ENCODE measurements at regions of chr16 and their contacts with region 1.

Region 1: DNA sequence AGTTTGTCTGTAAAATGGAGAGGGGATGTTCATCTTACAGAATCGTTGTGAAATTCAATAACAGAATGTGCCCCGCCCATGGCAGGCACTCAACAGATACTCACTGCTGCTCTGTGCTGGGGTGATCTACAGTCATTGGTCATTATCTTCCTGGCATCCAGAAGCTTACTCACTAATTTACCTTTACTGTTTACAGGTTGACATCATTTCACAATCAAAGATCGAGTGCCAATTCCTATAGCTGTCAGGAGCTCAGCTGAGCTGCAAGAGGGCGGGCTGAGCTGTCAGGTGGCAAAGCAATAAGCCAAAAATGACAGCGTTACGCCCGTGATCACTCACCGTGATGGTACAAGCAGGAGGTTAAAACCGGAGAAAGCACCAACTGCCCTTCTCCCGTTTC is 51.2 kb downstream of the LITAF start:
- DNase-seq: no peak
- ATAC-seq: no peak
- H3K4me3 Mint-ChIP-seq: no peak overlapping the region
- H3K27ac Mint-ChIP-seq: no peak overlapping the region
- H3K4me1 Mint-ChIP-seq: peaks cover 6% of the 10 kb centered on the region
- H3K27me3 Mint-ChIP-seq: no peaks in the 10 kb centered on the region

Region 2: DNA sequence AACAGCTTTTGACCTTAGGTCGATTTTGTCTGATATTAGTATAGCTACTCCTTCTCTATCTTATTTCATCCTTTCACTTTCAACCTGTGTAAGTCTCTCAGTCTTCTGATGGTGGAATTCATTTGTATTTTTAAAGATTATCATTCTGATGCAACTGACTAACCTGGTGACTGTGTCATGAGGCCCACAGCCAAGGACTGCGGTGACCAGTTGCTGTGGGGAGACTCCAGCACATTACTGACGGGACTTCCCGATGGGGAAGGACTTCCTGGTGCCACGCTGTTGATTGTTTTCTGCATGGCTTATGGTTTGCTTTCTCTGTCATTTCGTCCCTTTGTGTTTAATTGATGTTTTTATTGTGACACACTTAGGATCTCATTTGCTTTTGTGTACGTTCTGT is 156.1 kb before region 1 on chr16:
- CTCF ChIA-PET with region 1: no interaction called
- DNase-seq: peak; percentile 81
- ATAC-seq: peak; percentile 86
- H3K4me3 Mint-ChIP-seq: peak overlapping the region; percentile 60
- H3K27ac Mint-ChIP-seq: peak overlapping the region; percentile 81
- H3K4me1 Mint-ChIP-seq: peaks cover 17% of the 10 kb centered on the region
- H3K27me3 Mint-ChIP-seq: no peaks in the 10 kb centered on the region

Region 3: DNA sequence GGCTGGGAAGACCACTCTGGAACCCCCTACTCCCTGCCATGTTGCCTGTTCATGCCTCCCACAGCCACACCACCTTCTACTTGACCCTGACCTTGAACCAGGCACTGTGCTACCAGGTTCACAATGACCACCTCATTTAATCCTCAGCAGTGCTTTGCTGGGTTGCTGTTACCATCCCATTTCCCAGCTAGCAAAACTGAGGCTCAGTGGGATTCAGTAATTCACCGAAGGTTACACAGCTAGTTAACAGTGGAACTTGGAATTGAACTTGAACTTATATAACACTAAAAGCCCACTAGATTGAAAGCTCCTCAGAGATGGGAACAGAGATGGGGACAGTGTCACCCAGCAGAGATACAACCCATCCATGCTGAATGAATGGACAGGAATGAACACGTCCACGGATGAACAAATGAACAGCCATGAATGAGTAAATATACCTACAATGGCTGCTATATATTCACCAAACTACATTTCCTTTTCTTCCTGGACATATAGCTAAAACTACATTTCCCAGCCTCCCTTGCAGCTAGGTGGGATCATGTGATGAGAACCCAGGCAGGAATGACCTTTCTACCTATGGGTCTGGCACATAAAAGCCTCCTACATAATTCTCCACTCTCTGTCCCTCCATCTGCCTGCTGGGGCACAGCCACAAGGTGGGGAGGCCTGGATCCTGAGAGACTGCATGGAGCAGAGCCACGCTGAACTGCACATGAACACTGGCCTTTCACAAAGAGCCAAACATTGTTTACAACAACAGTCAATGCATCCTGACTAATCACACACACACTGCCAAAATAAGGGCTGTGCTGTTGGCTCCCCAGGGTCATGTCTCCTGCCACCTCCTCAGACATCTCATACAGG is 95.4 kb before region 1 on chr16:
- CTCF ChIA-PET with region 1: no interaction called
- DNase-seq: no peak
- ATAC-seq: no peak
- H3K4me3 Mint-ChIP-seq: no peak overlapping the region
- H3K27ac Mint-ChIP-seq: no peak overlapping the region
- H3K4me1 Mint-ChIP-seq: no peaks in the 10 kb centered on the region
- H3K27me3 Mint-ChIP-seq: peaks cover 4% of the 10 kb centered on the region

Region 4: GRCh38 chr16:11493532-11493929 is 41.9 kb before region 1 on chr16:
- CTCF ChIA-PET with region 1: no interaction called
- DNase-seq: no peak
- ATAC-seq: no peak
- H3K4me3 Mint-ChIP-seq: no peak overlapping the region
- H3K27ac Mint-ChIP-seq: no peak overlapping the region
- H3K4me1 Mint-ChIP-seq: peaks cover 18% of the 10 kb centered on the region
- H3K27me3 Mint-ChIP-seq: no peaks in the 10 kb centered on the region

Region 5: GRCh38 chr16:11547118-11547916 is 11.8 kb after region 1 on chr16:
- CTCF ChIA-PET with region 1: interaction called, 10 read pairs
- DNase-seq: no peak
- ATAC-seq: no peak
- H3K4me3 Mint-ChIP-seq: no peak overlapping the region
- H3K27ac Mint-ChIP-seq: no peak overlapping the region
- H3K4me1 Mint-ChIP-seq: no peaks in the 10 kb centered on the region
- H3K27me3 Mint-ChIP-seq: no peaks in the 10 kb centered on the region

Region 6: GRCh38 chr16:11554053-11554452 is 18.6 kb after region 1 on chr16:
- CTCF ChIA-PET with region 1: interaction called, 11 read pairs
- DNase-seq: no peak
- ATAC-seq: no peak
- H3K4me3 Mint-ChIP-seq: no peak overlapping the region
- H3K27ac Mint-ChIP-seq: no peak overlapping the region
- H3K4me1 Mint-ChIP-seq: peaks cover 31% of the 10 kb centered on the region
- H3K27me3 Mint-ChIP-seq: no peaks in the 10 kb centered on the region

Region 7: GRCh38 chr16:11586856-11587642 is 51.6 kb after region 1 on chr16 and contains the start of gene LITAF:
- CTCF ChIA-PET with region 1: interaction called, 30 read pairs
- DNase-seq: peak; percentile 75
- ATAC-seq: peak; percentile 78
- H3K4me3 Mint-ChIP-seq: peak within 1 kb of the TSS; percentile 89
- H3K27ac Mint-ChIP-seq: peak within 1 kb of the TSS; percentile 90
- H3K4me1 Mint-ChIP-seq: peaks cover 41% of the 10 kb centered on the region
- H3K27me3 Mint-ChIP-seq: peaks cover 3% of the 10 kb centered on the region
- total RNA-seq, gene LITAF: 91.4 to 155 TPM

Region 8: DNA sequence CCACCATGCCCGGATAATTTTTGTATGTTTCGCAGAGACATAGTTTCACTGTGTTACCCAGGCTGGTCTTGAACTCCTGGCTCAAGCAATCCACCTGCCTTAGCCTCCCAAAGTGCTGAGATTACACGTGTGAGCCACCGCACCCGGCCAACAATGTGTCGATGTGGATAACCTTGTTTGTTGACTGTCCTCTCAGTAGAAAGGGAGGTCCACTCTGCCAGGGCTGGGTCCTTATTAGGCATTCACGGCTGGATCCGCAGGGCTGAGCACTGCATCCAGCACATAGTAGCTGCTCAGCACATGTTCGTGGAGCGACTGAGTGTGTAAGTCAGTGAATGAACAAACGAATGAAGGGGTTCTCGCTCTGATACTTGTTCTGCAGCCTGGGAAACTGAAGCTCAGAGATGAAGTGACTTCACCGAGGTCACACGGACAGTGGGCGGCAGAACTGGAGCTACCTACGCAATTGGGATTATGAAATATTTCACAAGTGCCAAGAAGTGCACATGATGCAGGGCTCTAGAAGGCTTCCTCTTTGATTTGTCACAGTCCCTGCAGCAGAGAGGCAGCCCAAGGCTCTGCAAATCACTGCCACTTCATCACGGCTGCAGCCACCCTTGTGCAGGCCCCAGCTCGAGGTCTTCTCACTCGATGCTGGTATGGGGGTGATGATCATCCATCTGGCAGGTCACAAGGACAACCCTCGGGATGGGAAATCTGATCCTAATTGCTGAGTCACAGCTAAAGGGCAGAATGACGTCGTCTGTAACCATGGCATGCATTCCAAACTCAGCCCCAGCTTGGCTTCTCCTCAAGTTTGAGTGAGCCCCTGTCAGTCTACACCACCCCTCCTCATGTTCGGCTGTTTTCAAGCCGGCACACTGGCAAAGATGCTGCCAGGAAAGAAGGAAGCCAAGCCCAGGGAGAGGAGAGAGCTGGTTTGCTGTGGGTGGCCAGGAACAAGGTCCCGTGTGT is 104.7 kb after region 1 on chr16:
- CTCF ChIA-PET with region 1: interaction called, 147 read pairs
- DNase-seq: no peak
- ATAC-seq: no peak
- H3K4me3 Mint-ChIP-seq: no peak overlapping the region
- H3K27ac Mint-ChIP-seq: no peak overlapping the region
- H3K4me1 Mint-ChIP-seq: peaks cover 2% of the 10 kb centered on the region
- H3K27me3 Mint-ChIP-seq: peaks cover 4% of the 10 kb centered on the region

Region 9: DNA sequence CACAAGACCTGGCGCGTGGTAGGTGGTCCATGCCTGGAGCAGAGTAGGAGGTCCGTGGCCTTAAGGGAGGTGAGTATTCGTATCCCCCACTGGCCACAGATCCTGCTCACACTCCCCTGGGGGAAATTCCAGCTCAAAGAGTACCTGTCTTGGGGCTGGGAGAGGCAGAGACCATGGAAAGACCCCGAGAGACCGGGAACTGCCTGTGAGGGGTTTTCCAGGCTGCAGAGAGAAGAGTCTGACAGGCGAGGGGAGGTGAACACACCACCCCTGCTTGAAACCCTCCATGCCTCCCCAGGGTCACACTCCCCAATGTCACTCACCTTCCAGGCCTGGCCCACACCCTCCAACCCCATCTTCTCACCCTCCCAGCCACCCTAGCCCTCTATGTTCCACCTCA is 120.2 kb after region 1 on chr16:
- CTCF ChIA-PET with region 1: interaction called, 13 read pairs
- DNase-seq: no peak
- ATAC-seq: no peak
- H3K4me3 Mint-ChIP-seq: no peak overlapping the region
- H3K27ac Mint-ChIP-seq: no peak overlapping the region
- H3K4me1 Mint-ChIP-seq: peaks cover 13% of the 10 kb centered on the region
- H3K27me3 Mint-ChIP-seq: peaks cover 36% of the 10 kb centered on the region

Region 10: GRCh38 chr16:11698271-11698689 is 162.8 kb after region 1 on chr16:
- CTCF ChIA-PET with region 1: interaction called, 14 read pairs
- DNase-seq: peak; percentile 54
- ATAC-seq: peak; percentile 57
- H3K4me3 Mint-ChIP-seq: no peak overlapping the region
- H3K27ac Mint-ChIP-seq: peak overlapping the region; percentile 39
- H3K4me1 Mint-ChIP-seq: peaks cover 50% of the 10 kb centered on the region
- H3K27me3 Mint-ChIP-seq: no peaks in the 10 kb centered on the region